Esophagus muscularis mucosa (tissue), 4 donors: ENCODE measurements at regions of chr6 and their contacts with region 1.

Region 1: GRCh38 chr6:7615611-7616383 is 25.8 kb downstream of the SNRNP48 start:
- DNase-seq: no peak
- H3K4me3 ChIP-seq: peak overlapping the region in 1 of 4 donors; percentile 28
- H3K27ac ChIP-seq: no peak overlapping the region
- H3K4me1 ChIP-seq: peaks cover 0 to 12% (median 6%) of the 10 kb centered on the region in 4 donors
- H3K27me3 ChIP-seq: no peaks in the 10 kb centered on the region
- CTCF ChIP-seq: peak; percentile 54 to 77 (median 57)
- EP300 ChIP-seq: no peak
- POLR2A ChIP-seq: no peak

Region 2: GRCh38 chr6:6676910-6677441 is 938.8 kb before region 1 on chr6:
- intact Hi-C with region 1: loop called (anchors 5 kb)
- DNase-seq: peak; percentile 98
- H3K4me3 ChIP-seq: no peak overlapping the region
- H3K27ac ChIP-seq: peak overlapping the region in 3 of 4 donors; percentile 19 to 42 (median 27)
- H3K4me1 ChIP-seq: peaks cover 6 to 13% (median 7%) of the 10 kb centered on the region in 4 donors
- H3K27me3 ChIP-seq: no peaks in the 10 kb centered on the region
- CTCF ChIP-seq: peak; percentile 95 to 99 (median 98)
- EP300 ChIP-seq: no peak
- POLR2A ChIP-seq: no peak

Region 3: DNA sequence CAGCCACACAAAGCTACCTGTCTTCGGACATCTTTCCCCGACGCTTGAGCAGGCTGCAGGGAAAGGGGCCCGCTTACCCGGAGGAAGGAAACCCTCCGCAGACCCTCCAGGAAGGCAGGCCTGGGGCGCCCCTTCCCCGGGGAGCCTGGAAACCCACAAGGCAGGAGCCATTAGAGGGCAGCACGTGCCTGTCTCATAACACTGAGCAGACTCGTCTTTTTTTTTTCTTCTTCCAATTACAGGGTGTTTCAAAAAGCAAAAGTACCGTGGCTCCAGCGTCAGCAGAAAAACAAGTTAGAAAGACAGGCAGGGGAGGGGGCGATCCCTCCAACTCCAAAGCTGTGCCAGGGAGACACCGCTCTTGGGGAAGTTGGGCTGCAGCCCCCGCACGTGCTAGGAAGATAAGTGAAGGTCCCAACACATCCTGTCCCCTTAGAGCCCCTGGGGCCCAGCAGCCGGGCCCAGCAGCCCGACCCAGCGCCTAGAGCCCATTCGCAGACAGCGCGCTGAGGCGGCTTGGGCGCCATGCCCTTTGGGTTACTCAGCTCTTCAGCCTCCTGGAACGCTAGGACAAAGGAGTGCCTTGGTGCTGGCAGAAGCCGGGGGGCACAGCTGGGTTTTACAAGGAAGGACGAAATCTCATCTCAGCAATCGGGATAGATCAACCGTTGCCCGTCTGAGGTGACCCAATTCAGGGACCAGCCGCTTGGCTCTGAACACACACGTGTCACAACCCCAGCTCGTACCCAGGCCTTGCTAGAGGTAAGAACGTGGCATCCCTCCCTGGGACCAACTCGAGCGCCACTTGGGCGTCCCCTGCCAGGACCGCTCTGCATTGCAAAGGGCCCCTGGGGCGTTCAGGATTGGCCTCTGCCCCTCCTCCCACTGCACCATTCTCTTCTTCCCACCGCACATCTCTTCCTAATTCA is 891.0 kb before region 1 on chr6:
- intact Hi-C with region 1: loop called (anchors 5 kb)
- DNase-seq: peak; percentile 93
- H3K4me3 ChIP-seq: peak overlapping the region; percentile 44 to 55 (median 48)
- H3K27ac ChIP-seq: peak overlapping the region; percentile 65 to 80 (median 71)
- H3K4me1 ChIP-seq: peaks cover 19 to 32% (median 23%) of the 10 kb centered on the region in 4 donors
- H3K27me3 ChIP-seq: no peaks in the 10 kb centered on the region
- CTCF ChIP-seq: peak; percentile 62 to 72 (median 64)
- EP300 ChIP-seq: no peak
- POLR2A ChIP-seq: no peak

Region 4: DNA sequence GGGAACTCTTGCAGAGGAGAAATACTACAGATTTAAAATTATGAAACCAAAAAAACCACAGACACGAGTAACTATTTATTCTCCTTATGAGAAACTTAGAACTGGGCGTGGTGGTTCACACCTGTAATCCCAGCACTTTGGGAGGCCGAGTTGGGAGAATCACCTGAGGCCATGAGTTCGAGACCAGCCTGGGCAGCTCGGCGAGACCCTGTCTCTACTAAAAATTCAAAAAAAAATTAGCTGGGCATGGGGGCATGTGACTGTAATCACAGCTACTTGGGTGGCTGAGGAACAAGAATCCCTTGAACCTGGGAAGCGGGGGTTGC is 339.6 kb before region 1 on chr6:
- intact Hi-C with region 1: loop called (anchors 1 kb)
- DNase-seq: no peak
- H3K4me3 ChIP-seq: no peak overlapping the region
- H3K27ac ChIP-seq: no peak overlapping the region
- H3K4me1 ChIP-seq: peaks cover 0 to 5% (median 2%) of the 10 kb centered on the region in 4 donors
- H3K27me3 ChIP-seq: no peaks in the 10 kb centered on the region
- CTCF ChIP-seq: no peak
- EP300 ChIP-seq: no peak
- POLR2A ChIP-seq: no peak